B cell (primary cell): ENCODE measurements at regions of chr5 and their contacts with region 1.

Region 1: GRCh38 chr5:99032234-99033013 is 103.6 kb upstream of the CHD1 start:
- DNase-seq: peak; percentile 73
- ATAC-seq: peak; percentile 56
- H3K4me3 ChIP-seq: peak overlapping the region in 2 of 5 experiments; percentile 38 to 60
- H3K4me3 Mint-ChIP-seq: peak overlapping the region; percentile 92
- H3K27ac ChIP-seq: peak overlapping the region; percentile 60 to 82
- H3K27ac Mint-ChIP-seq: peak overlapping the region; percentile 93
- H3K4me1 ChIP-seq: peaks cover 52 to 54% of the 10 kb centered on the region in 2 donors
- H3K4me1 Mint-ChIP-seq: peaks cover 80% of the 10 kb centered on the region
- H3K27me3 ChIP-seq: no peaks in the 10 kb centered on the region
- H3K27me3 Mint-ChIP-seq: no peaks in the 10 kb centered on the region
- CTCF ChIP-seq: peak; percentile 42

Region 2: GRCh38 chr5:98096155-98096554 is 936.3 kb before region 1 on chr5:
- CTCF ChIA-PET with region 1: no interaction called
- POLR2A ChIA-PET with region 1: no interaction called
- intact Hi-C with region 1: no loop called
- DNase-seq: no peak
- ATAC-seq: no peak
- H3K4me3 ChIP-seq: no peak overlapping the region
- H3K4me3 Mint-ChIP-seq: no peak overlapping the region
- H3K27ac ChIP-seq: no peak overlapping the region
- H3K27ac Mint-ChIP-seq: no peak overlapping the region
- H3K4me1 ChIP-seq: no peaks in the 10 kb centered on the region
- H3K4me1 Mint-ChIP-seq: no peaks in the 10 kb centered on the region
- H3K27me3 ChIP-seq: no peaks in the 10 kb centered on the region
- H3K27me3 Mint-ChIP-seq: no peaks in the 10 kb centered on the region
- CTCF ChIP-seq: no peak

Region 3: DNA sequence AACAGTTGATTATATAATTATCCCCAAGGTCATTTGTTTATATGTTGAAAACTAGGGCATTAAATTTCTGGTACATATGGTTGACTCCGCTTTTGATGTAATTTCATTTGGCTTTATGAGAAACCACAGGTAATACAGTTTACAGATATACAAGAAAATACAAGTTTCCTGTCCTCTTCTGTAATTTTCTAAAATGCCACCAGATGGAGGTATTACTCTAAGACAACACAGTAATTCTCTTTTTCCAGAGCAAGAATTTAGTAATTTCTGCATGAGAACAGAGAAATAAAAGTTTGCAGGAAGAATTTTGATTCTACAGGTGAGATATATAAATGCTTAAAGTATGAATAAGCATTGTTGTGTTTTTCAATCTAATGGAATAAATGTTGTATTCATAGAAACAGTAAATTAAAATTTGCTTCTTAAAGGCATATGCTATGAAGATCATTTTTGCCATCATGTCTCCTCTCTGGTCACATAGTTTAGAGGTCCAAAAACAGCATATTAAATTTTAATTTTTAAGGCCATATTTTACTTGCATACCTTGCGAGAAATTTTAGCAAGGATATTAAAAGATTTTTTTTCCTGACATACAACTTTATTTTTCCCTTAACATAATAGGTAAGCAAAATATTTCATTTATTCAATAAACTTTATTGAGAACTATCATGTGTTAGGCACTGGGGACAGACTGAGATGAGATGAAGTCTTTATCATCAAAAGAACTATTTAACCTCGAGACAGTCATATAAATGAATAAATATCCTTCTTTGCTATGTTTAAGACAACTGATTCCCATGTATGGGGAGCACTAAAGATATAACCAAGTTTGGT is 126.3 kb before region 1 on chr5:
- CTCF ChIA-PET with region 1: interaction called, 67 read pairs
- POLR2A ChIA-PET with region 1: no interaction called
- intact Hi-C with region 1: loop called (anchors 1 kb)
- DNase-seq: peak; percentile 72
- ATAC-seq: peak; percentile 36
- H3K4me3 ChIP-seq: no peak overlapping the region
- H3K4me3 Mint-ChIP-seq: no peak overlapping the region
- H3K27ac ChIP-seq: no peak overlapping the region
- H3K27ac Mint-ChIP-seq: no peak overlapping the region
- H3K4me1 ChIP-seq: peaks cover 5 to 12% of the 10 kb centered on the region in 2 donors
- H3K4me1 Mint-ChIP-seq: peaks cover 31% of the 10 kb centered on the region
- H3K27me3 ChIP-seq: no peaks in the 10 kb centered on the region
- H3K27me3 Mint-ChIP-seq: no peaks in the 10 kb centered on the region
- CTCF ChIP-seq: peak; percentile 92

Region 4: DNA sequence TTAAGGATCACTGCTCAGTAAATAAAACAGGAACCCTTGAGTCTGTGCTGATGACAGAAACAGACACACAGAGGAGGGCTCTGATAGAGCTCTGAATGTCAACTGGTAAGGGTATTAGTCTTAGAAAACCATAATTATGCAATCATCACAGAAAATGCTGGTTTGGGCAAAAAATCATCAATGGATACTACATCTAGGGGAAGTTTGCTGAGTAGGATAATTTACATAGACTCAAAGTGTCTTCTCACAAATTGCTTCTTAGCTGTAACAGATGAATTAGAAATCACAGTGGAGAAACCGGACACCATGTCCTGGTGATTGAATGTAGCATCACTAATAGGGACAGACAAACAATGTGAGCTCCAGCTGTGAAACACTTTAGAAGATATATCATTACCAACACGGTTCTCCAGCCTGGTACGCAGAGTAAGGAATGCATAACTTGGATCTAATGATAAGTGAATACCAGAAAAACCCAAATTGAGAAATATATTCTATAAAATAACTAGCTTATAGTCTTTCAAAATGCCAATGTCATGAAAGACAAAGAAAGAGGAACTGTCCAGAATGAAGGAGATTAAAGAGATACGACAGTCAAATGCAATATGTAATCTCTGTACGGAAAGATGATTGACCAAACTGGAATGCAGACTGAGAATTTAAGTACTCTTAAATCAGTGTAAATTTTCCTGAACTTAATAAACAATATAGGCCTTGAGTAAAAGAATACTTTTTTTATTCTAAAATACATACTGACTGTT is 121.0 kb before region 1 on chr5:
- CTCF ChIA-PET with region 1: interaction called, 28 read pairs
- POLR2A ChIA-PET with region 1: no interaction called
- intact Hi-C with region 1: loop called (anchors 1 kb)
- DNase-seq: no peak
- ATAC-seq: no peak
- H3K4me3 ChIP-seq: no peak overlapping the region
- H3K4me3 Mint-ChIP-seq: no peak overlapping the region
- H3K27ac ChIP-seq: peak overlapping the region in 1 of 2 donors; percentile 36
- H3K27ac Mint-ChIP-seq: peak overlapping the region; percentile 11
- H3K4me1 ChIP-seq: peaks cover 10 to 15% of the 10 kb centered on the region in 2 donors
- H3K4me1 Mint-ChIP-seq: peaks cover 57% of the 10 kb centered on the region
- H3K27me3 ChIP-seq: no peaks in the 10 kb centered on the region
- H3K27me3 Mint-ChIP-seq: no peaks in the 10 kb centered on the region
- CTCF ChIP-seq: no peak

Region 5: DNA sequence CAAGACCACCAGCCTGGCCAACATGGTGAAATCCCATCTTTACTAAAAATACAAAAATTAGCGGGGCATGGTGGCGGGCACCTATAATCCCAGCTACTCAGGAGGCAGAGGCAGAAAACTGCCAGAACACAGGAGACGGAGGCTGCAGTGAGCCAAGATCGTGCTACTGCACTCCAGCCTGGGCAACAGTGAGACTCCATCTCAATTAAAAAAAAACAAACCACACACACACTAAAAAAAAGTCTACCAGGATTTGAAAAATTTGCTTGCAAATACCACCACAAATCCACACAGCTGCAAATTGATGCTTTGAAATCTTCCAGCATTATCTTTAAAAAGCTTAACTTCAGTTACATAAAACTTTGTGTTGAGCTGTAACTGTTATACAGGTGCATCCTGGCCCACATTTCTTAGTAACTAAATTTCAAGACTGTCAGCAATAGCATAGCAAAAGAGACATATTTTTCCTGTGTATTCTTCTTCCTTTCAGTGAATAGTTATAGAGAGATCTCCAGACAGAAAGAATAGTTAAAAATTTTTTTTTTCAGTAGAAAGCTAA is 110.4 kb before region 1 on chr5:
- CTCF ChIA-PET with region 1: interaction called, 32 read pairs
- POLR2A ChIA-PET with region 1: no interaction called
- intact Hi-C with region 1: no loop called
- DNase-seq: no peak
- ATAC-seq: no peak
- H3K4me3 ChIP-seq: no peak overlapping the region
- H3K4me3 Mint-ChIP-seq: peak overlapping the region; percentile 1
- H3K27ac ChIP-seq: peak overlapping the region in 1 of 2 donors; percentile 5
- H3K27ac Mint-ChIP-seq: no peak overlapping the region
- H3K4me1 ChIP-seq: peaks cover 14 to 30% of the 10 kb centered on the region in 2 donors
- H3K4me1 Mint-ChIP-seq: peaks cover 60% of the 10 kb centered on the region
- H3K27me3 ChIP-seq: no peaks in the 10 kb centered on the region
- H3K27me3 Mint-ChIP-seq: no peaks in the 10 kb centered on the region
- CTCF ChIP-seq: no peak

Region 6: DNA sequence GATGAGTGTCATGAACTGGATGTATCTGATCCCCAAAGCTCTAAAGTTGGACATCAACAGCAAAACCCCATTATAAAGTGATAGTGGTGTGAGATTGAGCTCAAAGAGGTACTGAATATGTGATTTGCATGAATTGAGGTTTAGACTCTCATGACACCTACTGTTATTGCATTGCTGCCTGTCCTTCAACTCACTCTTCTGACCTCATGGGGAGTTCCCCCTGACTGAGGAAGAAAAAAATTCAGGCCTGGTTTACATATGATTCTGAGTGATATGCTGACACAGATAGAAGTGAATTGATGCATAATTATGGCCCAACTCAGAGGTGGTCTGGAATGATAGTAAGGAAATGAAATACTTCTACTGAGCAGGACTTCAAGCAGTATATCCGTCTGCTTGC is 27.5 kb before region 1 on chr5:
- CTCF ChIA-PET with region 1: interaction called, 10 read pairs
- POLR2A ChIA-PET with region 1: no interaction called
- intact Hi-C with region 1: loop called (anchors 2 kb)
- DNase-seq: peak; percentile 86
- ATAC-seq: peak; percentile 99
- H3K4me3 ChIP-seq: no peak overlapping the region
- H3K4me3 Mint-ChIP-seq: peak overlapping the region; percentile 42
- H3K27ac ChIP-seq: no peak overlapping the region
- H3K27ac Mint-ChIP-seq: peak overlapping the region; percentile 80
- H3K4me1 ChIP-seq: peaks cover 15 to 22% of the 10 kb centered on the region in 2 donors
- H3K4me1 Mint-ChIP-seq: peaks cover 29% of the 10 kb centered on the region
- H3K27me3 ChIP-seq: no peaks in the 10 kb centered on the region
- H3K27me3 Mint-ChIP-seq: no peaks in the 10 kb centered on the region
- CTCF ChIP-seq: no peak